Naive thymus-derived CD4-positive, alpha-beta T cell (primary cell): ENCODE measurements at regions of chr2 and their contacts with region 1.

Region 1: DNA sequence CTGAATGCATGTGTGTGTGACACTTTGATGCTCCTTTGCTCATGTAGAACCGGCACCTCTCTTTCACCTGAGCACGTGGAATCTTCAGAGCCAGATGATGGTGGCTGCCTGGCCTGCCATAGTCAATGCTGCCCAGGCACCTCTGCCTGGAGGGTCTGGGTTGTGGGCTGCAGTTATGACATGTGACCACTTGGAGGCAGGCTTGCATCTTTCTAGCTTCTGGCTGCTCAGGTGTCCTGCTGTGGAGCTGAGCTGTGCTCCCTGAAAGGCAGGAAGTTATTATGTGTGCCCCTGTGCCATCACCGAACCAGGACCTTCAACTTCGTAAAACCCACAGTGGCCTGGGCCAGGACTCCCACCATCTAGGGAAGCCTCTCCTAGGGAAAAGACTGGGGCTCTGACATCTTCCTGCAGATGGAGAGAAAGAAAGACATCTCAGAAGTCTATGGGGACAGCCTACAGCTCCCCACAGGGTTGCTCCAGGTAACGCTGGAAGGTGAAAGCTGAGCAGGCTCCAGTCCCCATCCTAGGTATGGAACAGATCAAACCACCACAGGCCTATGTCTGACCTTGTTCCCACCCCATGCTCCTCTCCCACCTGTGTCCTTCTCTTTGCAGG is 30.2 kb downstream of the PSD4 start:
- DNase-seq: peak; percentile 50 to 84 (median 76)
- ATAC-seq: peak; percentile 92
- H3K4me3 ChIP-seq: no peak overlapping the region
- H3K4me3 Mint-ChIP-seq: peak overlapping the region in 9 of 10 donors; percentile 23 to 63 (median 48)
- H3K27ac ChIP-seq: peak overlapping the region; percentile 63
- H3K27ac Mint-ChIP-seq: peak overlapping the region; percentile 65 to 94 (median 87)
- H3K4me1 ChIP-seq: peaks cover 9 to 10% of the 10 kb centered on the region in 2 donors
- H3K4me1 Mint-ChIP-seq: peaks cover 15 to 49% (median 31%) of the 10 kb centered on the region in 7 donors
- H3K27me3 ChIP-seq: no peaks in the 10 kb centered on the region
- H3K27me3 Mint-ChIP-seq: no peaks in the 10 kb centered on the region

Region 2: DNA sequence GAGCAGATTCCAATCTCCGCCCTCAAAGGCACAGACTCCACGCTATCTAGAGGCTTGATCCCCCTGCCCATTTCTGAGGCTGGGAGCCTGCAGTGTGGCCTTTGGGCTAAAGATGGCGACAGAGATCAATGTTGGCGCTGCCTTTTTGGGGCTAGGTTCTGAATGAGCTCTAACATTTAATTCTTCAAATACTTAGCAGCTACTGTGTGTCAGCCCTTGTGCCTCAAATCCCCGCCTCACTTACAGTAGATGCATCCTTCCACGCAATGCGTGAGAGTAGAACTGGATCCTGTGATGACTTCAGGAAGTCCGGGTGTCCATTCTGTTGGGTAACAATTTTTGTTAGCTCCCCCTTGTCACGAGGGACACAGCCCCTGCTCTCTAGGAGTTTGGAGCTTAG is 123.9 kb before region 1 on chr2:
- CTCF ChIA-PET with region 1: interaction called, 8 read pairs
- POLR2A ChIA-PET with region 1: interaction called, 3 read pairs
- intact Hi-C with region 1: loop called (anchors 2 kb)
- DNase-seq: peak in 7 of 9 donors; percentile 26 to 55 (median 35)
- ATAC-seq: peak; percentile 69
- H3K4me3 ChIP-seq: no peak overlapping the region
- H3K4me3 Mint-ChIP-seq: no peak overlapping the region
- H3K27ac ChIP-seq: no peak overlapping the region
- H3K27ac Mint-ChIP-seq: no peak overlapping the region
- H3K4me1 ChIP-seq: no peaks in the 10 kb centered on the region
- H3K4me1 Mint-ChIP-seq: peaks cover 2 to 13% (median 4%) of the 10 kb centered on the region in 7 donors
- H3K27me3 ChIP-seq: no peaks in the 10 kb centered on the region
- H3K27me3 Mint-ChIP-seq: peaks cover 0 to 7% (median 0%) of the 10 kb centered on the region in 5 donors

Region 3: DNA sequence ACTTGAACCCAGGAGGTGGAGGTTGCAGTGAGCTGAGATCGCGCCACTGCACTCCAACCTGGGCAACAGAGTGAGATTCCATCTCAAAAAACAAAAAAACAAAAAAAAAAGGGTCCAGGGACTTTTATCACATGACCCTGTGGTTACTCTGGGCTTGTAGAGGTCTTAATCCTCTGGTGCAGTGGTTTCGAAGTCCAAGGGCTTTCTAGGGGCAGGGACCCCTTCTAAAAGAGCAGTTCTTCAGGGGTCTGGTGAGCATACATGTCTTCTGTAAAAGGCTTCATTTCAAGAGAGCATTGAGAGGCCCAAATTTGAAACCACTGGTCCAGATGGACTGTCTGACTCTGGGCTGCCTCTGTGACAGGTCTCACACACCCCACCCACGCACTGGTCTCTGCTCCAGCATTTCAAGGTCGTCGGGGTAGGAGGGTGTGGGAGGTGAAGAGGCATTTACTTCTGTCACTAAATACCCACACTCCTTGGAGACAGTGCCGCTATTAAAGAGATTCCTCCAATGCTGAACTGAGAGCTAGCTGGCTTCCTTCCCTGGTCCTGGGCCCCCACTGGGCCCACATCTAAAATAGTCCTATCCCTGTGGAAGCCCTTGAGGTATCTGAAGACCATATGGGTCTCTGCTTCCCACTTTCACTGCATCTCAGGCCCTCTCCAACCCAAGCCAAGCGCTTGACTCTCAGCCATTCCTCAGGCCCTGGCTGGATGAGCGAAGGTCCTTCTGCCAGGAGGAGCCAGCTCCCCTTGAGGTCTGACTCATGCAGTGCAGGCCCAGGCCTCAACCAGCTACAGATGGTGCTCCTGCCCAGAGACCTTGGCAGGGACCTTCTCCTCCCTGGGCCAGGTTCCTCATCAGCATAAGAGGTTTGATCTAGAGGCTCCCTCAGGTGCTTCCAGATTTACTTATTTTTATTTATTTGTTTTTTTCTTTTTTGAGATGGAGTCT is 29.9 kb after region 1 on chr2:
- CTCF ChIA-PET with region 1: interaction called, 15 read pairs
- POLR2A ChIA-PET with region 1: interaction called, 3 read pairs
- intact Hi-C with region 1: loop called in 1 of 2 experiments (anchors 1 kb)
- DNase-seq: no peak
- ATAC-seq: no peak
- H3K4me3 ChIP-seq: no peak overlapping the region
- H3K4me3 Mint-ChIP-seq: peak overlapping the region in 2 of 10 donors; percentile 14 to 41
- H3K27ac ChIP-seq: no peak overlapping the region
- H3K27ac Mint-ChIP-seq: no peak overlapping the region
- H3K4me1 ChIP-seq: peaks cover 0 to 4% of the 10 kb centered on the region in 2 donors
- H3K4me1 Mint-ChIP-seq: peaks cover 3 to 39% (median 12%) of the 10 kb centered on the region in 7 donors
- H3K27me3 ChIP-seq: no peaks in the 10 kb centered on the region
- H3K27me3 Mint-ChIP-seq: no peaks in the 10 kb centered on the region

Region 4: DNA sequence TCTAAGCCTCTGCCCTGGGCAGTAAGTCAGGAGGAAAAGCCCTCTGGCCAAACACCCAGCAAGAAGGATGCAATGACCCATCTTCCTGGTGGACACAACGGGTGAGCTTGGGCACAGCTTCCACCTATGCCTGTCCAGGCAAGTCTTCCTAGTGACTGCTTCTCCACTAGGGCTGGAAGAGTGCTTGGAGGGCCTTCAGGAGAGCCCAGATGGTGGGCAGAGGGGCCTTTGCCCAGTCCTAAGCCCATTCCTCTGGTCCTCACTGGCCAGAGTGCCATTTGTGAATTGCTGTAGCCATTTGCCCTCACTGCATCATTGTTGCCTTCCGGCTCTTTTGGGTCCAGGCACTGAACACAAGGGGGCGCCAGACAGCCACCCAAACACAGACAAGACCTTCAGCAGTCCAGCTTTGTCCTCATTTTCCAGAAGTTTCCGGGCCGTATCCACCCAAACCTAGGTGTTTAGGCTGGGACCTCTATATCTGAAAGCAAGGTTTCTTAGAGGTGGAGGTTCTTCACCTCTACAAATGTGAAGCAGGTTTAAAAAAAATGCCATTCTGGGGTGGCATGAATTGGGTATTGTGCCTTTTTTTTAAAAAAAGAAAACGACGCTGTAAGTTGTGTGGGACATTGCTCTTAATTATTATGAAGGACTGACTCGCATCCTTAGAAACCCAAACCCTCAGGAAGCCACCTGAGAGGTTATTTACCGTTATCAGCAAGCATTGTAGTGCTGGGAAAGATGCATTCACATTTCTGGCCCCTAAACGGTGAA is 45.2 kb after region 1 on chr2:
- CTCF ChIA-PET with region 1: interaction called, 45 read pairs
- POLR2A ChIA-PET with region 1: interaction called, 4 read pairs
- intact Hi-C with region 1: loop called in 1 of 2 experiments (anchors 1 kb)
- DNase-seq: peak; percentile 53 to 84 (median 71)
- ATAC-seq: peak; percentile 81
- H3K4me3 ChIP-seq: no peak overlapping the region
- H3K4me3 Mint-ChIP-seq: peak overlapping the region in 5 of 10 donors; percentile 3 to 63 (median 33)
- H3K27ac ChIP-seq: peak overlapping the region; percentile 6
- H3K27ac Mint-ChIP-seq: peak overlapping the region; percentile 43 to 94 (median 87)
- H3K4me1 ChIP-seq: peaks cover 40 to 46% of the 10 kb centered on the region in 2 donors
- H3K4me1 Mint-ChIP-seq: peaks cover 32 to 58% (median 51%) of the 10 kb centered on the region in 7 donors
- H3K27me3 ChIP-seq: no peaks in the 10 kb centered on the region
- H3K27me3 Mint-ChIP-seq: no peaks in the 10 kb centered on the region

Region 5: GRCh38 chr2:113370478-113371091 is 166.6 kb after region 1 on chr2:
- CTCF ChIA-PET with region 1: interaction called, 32 read pairs
- POLR2A ChIA-PET with region 1: interaction called, 4 read pairs
- intact Hi-C with region 1: loop called (anchors 1 kb)
- DNase-seq: peak; percentile 27 to 82 (median 68)
- ATAC-seq: peak; percentile 91
- H3K4me3 ChIP-seq: no peak overlapping the region
- H3K4me3 Mint-ChIP-seq: no peak overlapping the region
- H3K27ac ChIP-seq: no peak overlapping the region
- H3K27ac Mint-ChIP-seq: peak overlapping the region in 3 of 9 donors; percentile 1 to 90 (median 40)
- H3K4me1 ChIP-seq: no peaks in the 10 kb centered on the region
- H3K4me1 Mint-ChIP-seq: peaks cover 0 to 18% (median 6%) of the 10 kb centered on the region in 7 donors
- H3K27me3 ChIP-seq: no peaks in the 10 kb centered on the region
- H3K27me3 Mint-ChIP-seq: peaks cover 0 to 16% (median 6%) of the 10 kb centered on the region in 5 donors

Region 6: DNA sequence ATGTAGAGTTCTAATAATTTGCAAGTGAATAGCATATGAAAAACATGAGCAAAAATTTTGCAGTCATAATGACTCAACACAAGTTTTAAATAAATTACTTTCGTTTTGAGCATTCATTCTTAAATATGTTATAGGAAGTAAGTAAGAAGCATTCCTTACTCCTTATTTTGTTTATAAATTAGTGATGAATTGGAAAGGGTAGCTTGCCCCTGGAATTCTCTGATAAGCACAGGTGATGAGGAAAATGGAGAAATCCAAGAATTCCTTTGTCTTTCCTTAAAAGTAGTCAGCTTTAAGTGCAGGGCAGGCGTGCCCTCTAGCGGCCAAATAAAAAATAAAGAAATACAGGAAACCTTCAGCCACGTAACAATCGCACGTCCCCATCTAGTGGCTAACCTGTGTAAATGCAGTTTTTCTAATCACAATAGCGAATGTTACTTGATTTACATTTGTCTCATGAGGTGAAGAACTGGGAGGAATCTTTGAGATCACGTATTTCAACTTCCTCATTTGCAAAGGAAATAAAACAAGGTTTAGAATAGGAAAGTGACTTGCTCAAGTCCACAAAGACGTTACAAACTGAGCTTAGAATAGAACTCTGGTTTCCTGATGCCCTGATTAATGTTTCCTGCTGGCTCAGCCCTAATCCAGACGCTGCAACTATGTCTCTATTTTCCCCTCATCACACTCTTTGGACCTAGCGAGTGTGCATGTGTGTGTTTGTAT is 186.3 kb after region 1 on chr2:
- CTCF ChIA-PET with region 1: interaction called, 21 read pairs
- POLR2A ChIA-PET with region 1: no interaction called
- intact Hi-C with region 1: loop called (anchors 5 kb)
- DNase-seq: peak in 8 of 9 donors; percentile 28 to 85 (median 82)
- ATAC-seq: peak; percentile 99
- H3K4me3 ChIP-seq: peak overlapping the region; percentile 73
- H3K4me3 Mint-ChIP-seq: peak overlapping the region; percentile 57 to 89 (median 77)
- H3K27ac ChIP-seq: no peak overlapping the region
- H3K27ac Mint-ChIP-seq: peak overlapping the region; percentile 22 to 84 (median 68)
- H3K4me1 ChIP-seq: no peaks in the 10 kb centered on the region
- H3K4me1 Mint-ChIP-seq: peaks cover 9 to 20% (median 16%) of the 10 kb centered on the region in 7 donors
- H3K27me3 ChIP-seq: no peaks in the 10 kb centered on the region
- H3K27me3 Mint-ChIP-seq: peaks cover 6 to 38% (median 11%) of the 10 kb centered on the region in 5 donors